ENCODE measurements at regions of chr5 and their contacts with region 1.

Region 1: GRCh38 chr5:103041071-103041676 is 78.8 kb downstream of the GIN1 start:
- DNase-seq: no peak
- H3K4me3 Mint-ChIP-seq: no peak overlapping the region
- H3K27ac Mint-ChIP-seq: no peak overlapping the region
- H3K4me1 Mint-ChIP-seq: no peaks in the 10 kb centered on the region
- H3K27me3 Mint-ChIP-seq: no peaks in the 10 kb centered on the region
- CTCF ChIP-seq: peak; percentile 48

Region 2: DNA sequence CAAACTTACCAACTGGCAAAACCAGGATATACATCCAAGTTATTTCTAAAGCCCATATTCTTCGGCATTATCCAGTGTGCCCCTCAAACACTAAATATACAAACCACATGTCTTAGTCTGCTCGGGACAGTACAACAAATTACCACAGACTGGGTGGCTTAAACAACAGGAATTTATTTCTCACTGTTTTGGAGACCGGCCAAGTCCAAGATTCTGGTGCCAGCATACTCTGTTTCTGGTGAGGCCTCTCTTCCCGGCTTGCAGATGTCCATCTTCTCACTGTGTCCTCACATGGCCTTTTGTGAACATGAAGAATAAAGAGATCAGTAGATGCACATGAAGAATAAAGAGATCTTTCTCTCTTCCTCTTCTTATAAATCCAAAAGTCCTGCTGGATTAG is 529.5 kb before region 1 on chr5:
- CTCF ChIA-PET with region 1: no interaction called
- intact Hi-C with region 1: loop called (anchors 1 kb)
- DNase-seq: no peak
- H3K4me3 Mint-ChIP-seq: no peak overlapping the region
- H3K27ac Mint-ChIP-seq: no peak overlapping the region
- H3K4me1 Mint-ChIP-seq: no peaks in the 10 kb centered on the region
- H3K27me3 Mint-ChIP-seq: no peaks in the 10 kb centered on the region
- CTCF ChIP-seq: no peak

Region 3: GRCh38 chr5:102536323-102536928 is 504.7 kb before region 1 on chr5:
- CTCF ChIA-PET with region 1: no interaction called
- intact Hi-C with region 1: loop called (anchors 1 kb)
- DNase-seq: no peak
- H3K4me3 Mint-ChIP-seq: no peak overlapping the region
- H3K27ac Mint-ChIP-seq: no peak overlapping the region
- H3K4me1 Mint-ChIP-seq: no peaks in the 10 kb centered on the region
- H3K27me3 Mint-ChIP-seq: no peaks in the 10 kb centered on the region
- CTCF ChIP-seq: peak; percentile 39

Region 4: GRCh38 chr5:102583276-102584124 is 457.7 kb before region 1 on chr5:
- CTCF ChIA-PET with region 1: no interaction called
- intact Hi-C with region 1: loop called (anchors 1 kb)
- DNase-seq: no peak
- H3K4me3 Mint-ChIP-seq: no peak overlapping the region
- H3K27ac Mint-ChIP-seq: no peak overlapping the region
- H3K4me1 Mint-ChIP-seq: no peaks in the 10 kb centered on the region
- H3K27me3 Mint-ChIP-seq: no peaks in the 10 kb centered on the region
- CTCF ChIP-seq: peak; percentile 68

Region 5: GRCh38 chr5:102681407-102681983 is 359.7 kb before region 1 on chr5:
- CTCF ChIA-PET with region 1: interaction called, 3 read pairs
- intact Hi-C with region 1: loop called (anchors 1 kb)
- DNase-seq: peak; percentile 87
- H3K4me3 Mint-ChIP-seq: no peak overlapping the region
- H3K27ac Mint-ChIP-seq: no peak overlapping the region
- H3K4me1 Mint-ChIP-seq: no peaks in the 10 kb centered on the region
- H3K27me3 Mint-ChIP-seq: peaks cover 12% of the 10 kb centered on the region
- CTCF ChIP-seq: peak; percentile 91

Region 6: GRCh38 chr5:102778478-102778877 is 262.7 kb before region 1 on chr5:
- CTCF ChIA-PET with region 1: no interaction called
- intact Hi-C with region 1: loop called (anchors 1 kb)
- DNase-seq: no peak
- H3K4me3 Mint-ChIP-seq: no peak overlapping the region
- H3K27ac Mint-ChIP-seq: no peak overlapping the region
- H3K4me1 Mint-ChIP-seq: peaks cover 9% of the 10 kb centered on the region
- H3K27me3 Mint-ChIP-seq: no peaks in the 10 kb centered on the region
- CTCF ChIP-seq: no peak

Region 7: GRCh38 chr5:103224118-103224893 is 183.1 kb after region 1 on chr5:
- CTCF ChIA-PET with region 1: interaction called, 3 read pairs
- intact Hi-C with region 1: loop called (anchors 5 kb)
- DNase-seq: peak; percentile 69
- H3K4me3 Mint-ChIP-seq: peak overlapping the region; percentile 20
- H3K27ac Mint-ChIP-seq: no peak overlapping the region
- H3K4me1 Mint-ChIP-seq: no peaks in the 10 kb centered on the region
- H3K27me3 Mint-ChIP-seq: no peaks in the 10 kb centered on the region
- CTCF ChIP-seq: peak; percentile 47